Psoas muscle (tissue), 8 donors: ENCODE measurements at regions of chr12 and their contacts with region 1.

Region 1: DNA sequence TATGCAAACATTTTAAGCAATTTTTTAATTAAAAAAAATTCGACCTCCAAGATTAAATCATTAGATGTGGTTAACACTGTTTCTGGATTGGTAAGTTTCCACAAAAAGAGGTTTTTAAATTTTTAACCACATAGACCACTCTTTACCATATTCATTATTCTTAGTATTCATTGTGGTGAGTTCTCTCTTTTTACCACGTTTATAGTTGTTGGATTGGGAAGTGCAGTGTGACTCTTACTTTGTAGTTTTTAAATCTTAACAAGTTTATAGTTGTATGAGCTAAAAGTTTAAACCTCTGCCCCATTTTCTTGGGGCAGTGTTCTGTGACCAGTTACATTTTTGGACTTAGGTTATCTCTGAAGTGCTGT is 8.6 kb downstream of the ATP2A2 start:
- DNase-seq: no peak
- ATAC-seq: no peak
- H3K4me3 ChIP-seq: peak overlapping the region; percentile 96
- H3K27ac ChIP-seq: peak overlapping the region; percentile 96
- H3K4me1 ChIP-seq: peaks cover 15% of the 10 kb centered on the region
- H3K27me3 ChIP-seq: no peaks in the 10 kb centered on the region
- CTCF ChIP-seq: no peak

Region 2: DNA sequence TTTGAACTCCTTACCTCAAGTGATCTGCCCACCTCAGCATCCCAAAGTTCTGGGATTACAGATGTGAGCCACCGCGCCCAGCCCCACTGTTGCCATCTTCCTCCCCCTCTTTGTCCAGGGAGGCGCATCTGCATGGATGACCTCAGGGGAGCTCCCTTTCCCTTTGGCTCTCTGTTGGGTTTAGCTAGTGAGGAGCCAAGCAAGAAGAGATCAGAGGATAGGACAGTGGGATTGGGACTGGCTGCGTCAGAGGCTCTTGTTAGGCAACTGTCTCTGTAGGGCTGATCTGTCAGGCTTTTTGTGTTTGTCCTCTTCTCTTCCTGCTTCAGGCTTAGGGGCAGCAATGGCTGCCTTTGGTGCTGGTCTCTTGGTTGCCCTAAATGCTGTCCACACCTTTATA is 174.0 kb before region 1 on chr12:
- intact Hi-C with region 1: no loop called
- DNase-seq: no peak
- ATAC-seq: no peak
- H3K4me3 ChIP-seq: no peak overlapping the region
- H3K27ac ChIP-seq: no peak overlapping the region
- H3K4me1 ChIP-seq: no peaks in the 10 kb centered on the region
- H3K27me3 ChIP-seq: no peaks in the 10 kb centered on the region
- CTCF ChIP-seq: no peak

Region 3: GRCh38 chr12:110170535-110171185 is 119.0 kb before region 1 on chr12:
- intact Hi-C with region 1: loop called in 1 of 2 experiments (anchors 2 kb)
- DNase-seq: no peak
- ATAC-seq: peak; percentile 95 to 96 (median 96)
- H3K4me3 ChIP-seq: peak overlapping the region; percentile 11
- H3K27ac ChIP-seq: peak overlapping the region; percentile 71
- H3K4me1 ChIP-seq: peaks cover 26% of the 10 kb centered on the region
- H3K27me3 ChIP-seq: no peaks in the 10 kb centered on the region
- CTCF ChIP-seq: no peak